Activated CD4-positive, alpha-beta T cell treated with anti-CD3 and anti-CD28 coated beads for 36 hours (primary cell): ENCODE measurements at regions of chr20 and their contacts with region 1.

Region 1: GRCh38 chr20:51531141-51531710 is 11.3 kb downstream of the NFATC2 start:
- DNase-seq: peak; percentile 90
- ATAC-seq: peak; percentile 82
- H3K4me3 Mint-ChIP-seq: peak overlapping the region; percentile 75
- H3K27ac Mint-ChIP-seq: peak overlapping the region; percentile 99
- H3K4me1 Mint-ChIP-seq: peaks cover 99% of the 10 kb centered on the region
- H3K27me3 Mint-ChIP-seq: no peaks in the 10 kb centered on the region

Region 2: GRCh38 chr20:51404298-51405060 is 126.7 kb before region 1 on chr20:
- CTCF ChIA-PET with region 1: no interaction called
- POLR2A ChIA-PET with region 1: interaction called, 5 read pairs
- intact Hi-C with region 1: loop called (anchors 1 to 2 kb)
- DNase-seq: peak; percentile 94
- ATAC-seq: peak; percentile 81
- H3K4me3 Mint-ChIP-seq: peak overlapping the region; percentile 1
- H3K27ac Mint-ChIP-seq: peak overlapping the region; percentile 96
- H3K4me1 Mint-ChIP-seq: peaks cover 89% of the 10 kb centered on the region
- H3K27me3 Mint-ChIP-seq: no peaks in the 10 kb centered on the region

Region 3: DNA sequence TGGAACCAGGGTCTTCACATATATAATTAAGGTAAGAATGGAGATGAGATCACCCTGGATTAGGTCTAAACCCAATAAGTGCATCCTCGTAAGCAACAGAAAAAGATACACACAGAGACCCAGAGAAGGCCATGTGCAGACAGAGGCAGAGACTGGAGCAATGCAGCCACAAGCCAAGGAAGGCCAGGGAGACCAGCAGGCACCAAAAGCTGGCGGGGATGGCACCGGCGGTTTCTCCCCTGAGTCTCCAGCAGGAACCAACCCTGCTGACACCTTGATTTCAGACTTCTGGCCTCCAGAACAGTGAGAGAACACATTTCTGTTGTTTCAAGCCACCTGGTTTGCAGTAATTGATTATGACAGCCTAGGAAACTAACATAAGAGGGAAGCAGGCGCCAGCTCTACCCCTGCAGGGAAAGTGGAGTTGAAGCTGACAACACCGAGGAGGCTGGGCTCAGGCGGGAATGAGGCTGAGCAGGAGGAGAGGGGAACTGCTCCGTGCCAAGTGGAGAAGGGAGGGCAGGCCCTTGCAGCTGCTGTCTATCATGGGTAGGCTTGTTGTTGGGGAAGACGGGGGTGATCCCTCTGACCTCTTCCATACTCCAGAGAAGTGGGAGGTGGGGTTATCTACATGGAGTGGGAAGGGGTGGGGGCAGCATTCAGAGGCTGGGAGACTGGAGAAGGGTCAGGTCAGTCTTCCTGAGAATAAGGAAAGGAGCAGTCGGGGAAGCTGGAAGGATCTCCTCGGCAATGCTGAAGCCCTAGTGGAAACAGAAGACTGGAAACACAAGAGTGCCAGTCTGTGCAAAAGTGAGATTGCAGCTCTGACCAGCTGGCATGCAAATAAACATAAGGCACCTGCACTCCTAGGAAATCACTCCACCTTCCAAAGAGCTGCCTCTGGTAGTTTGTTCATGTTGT is 61.4 kb before region 1 on chr20:
- CTCF ChIA-PET with region 1: no interaction called
- POLR2A ChIA-PET with region 1: interaction called, 3 read pairs
- intact Hi-C with region 1: loop called (anchors 1 to 2 kb)
- DNase-seq: peak; percentile 3
- ATAC-seq: no peak
- H3K4me3 Mint-ChIP-seq: no peak overlapping the region
- H3K27ac Mint-ChIP-seq: peak overlapping the region; percentile 95
- H3K4me1 Mint-ChIP-seq: peaks cover 57% of the 10 kb centered on the region
- H3K27me3 Mint-ChIP-seq: no peaks in the 10 kb centered on the region

Region 4: GRCh38 chr20:51512645-51513044 is 18.6 kb before region 1 on chr20:
- CTCF ChIA-PET with region 1: interaction called, 5 read pairs
- POLR2A ChIA-PET with region 1: interaction called, 3 read pairs
- intact Hi-C with region 1: loop called in 1 of 2 experiments (anchors 1 kb)
- DNase-seq: peak; percentile 52
- ATAC-seq: peak; percentile 92
- H3K4me3 Mint-ChIP-seq: peak overlapping the region; percentile 20
- H3K27ac Mint-ChIP-seq: peak overlapping the region; percentile 89
- H3K4me1 Mint-ChIP-seq: peaks cover 78% of the 10 kb centered on the region
- H3K27me3 Mint-ChIP-seq: no peaks in the 10 kb centered on the region

Region 5: GRCh38 chr20:51569827-51570738 is 38.9 kb after region 1 on chr20:
- CTCF ChIA-PET with region 1: interaction called, 3 read pairs
- POLR2A ChIA-PET with region 1: no interaction called
- intact Hi-C with region 1: loop called (anchors 1 to 5 kb)
- DNase-seq: no peak
- ATAC-seq: no peak
- H3K4me3 Mint-ChIP-seq: no peak overlapping the region
- H3K27ac Mint-ChIP-seq: no peak overlapping the region
- H3K4me1 Mint-ChIP-seq: peaks cover 16% of the 10 kb centered on the region
- H3K27me3 Mint-ChIP-seq: peaks cover 8% of the 10 kb centered on the region

Region 6: DNA sequence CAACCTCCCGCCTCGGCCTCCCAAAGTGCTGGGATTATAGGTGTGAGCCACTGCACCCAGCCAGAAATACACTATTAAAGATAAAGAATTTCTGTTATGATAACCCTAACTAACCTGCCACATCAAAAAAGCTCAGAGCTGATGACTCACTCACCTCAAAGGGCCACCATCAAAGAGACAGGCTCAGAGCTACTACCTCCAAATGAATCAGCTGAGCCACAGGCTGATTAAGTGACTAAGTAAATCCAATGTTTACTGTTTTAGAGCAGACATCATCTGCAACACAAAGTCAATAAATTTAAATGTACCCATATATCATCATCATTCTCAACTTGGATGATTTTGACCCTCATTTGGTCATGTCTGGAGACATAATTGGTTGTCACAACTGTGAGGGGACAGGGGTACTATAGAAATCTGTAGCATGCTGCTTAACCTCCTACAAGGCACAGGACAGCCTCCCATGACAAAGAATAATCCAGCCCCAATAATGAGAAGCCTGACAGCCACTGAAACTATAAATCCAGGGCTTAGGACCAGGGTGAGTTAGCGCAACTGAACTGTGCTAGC is 130.5 kb after region 1 on chr20:
- CTCF ChIA-PET with region 1: no interaction called
- POLR2A ChIA-PET with region 1: interaction called, 3 read pairs
- intact Hi-C with region 1: loop called in 1 of 2 experiments (anchors 1 kb)
- DNase-seq: peak; percentile 65
- ATAC-seq: peak; percentile 91
- H3K4me3 Mint-ChIP-seq: no peak overlapping the region
- H3K27ac Mint-ChIP-seq: no peak overlapping the region
- H3K4me1 Mint-ChIP-seq: peaks cover 19% of the 10 kb centered on the region
- H3K27me3 Mint-ChIP-seq: peaks cover 7% of the 10 kb centered on the region